ENCODE measurements at regions of chr1 and their contacts with region 1.

Region 1: GRCh38 chr1:193569096-193569982 is 382.9 kb upstream of the B3GALT2 start:
- DNase-seq: peak; percentile 51 to 69 (median 57)
- H3K4me3 ChIP-seq: no peak overlapping the region
- H3K4me3 Mint-ChIP-seq: peak overlapping the region in 7 of 8 donors; percentile 45 to 84 (median 74)
- H3K27ac ChIP-seq: peak overlapping the region; percentile 43
- H3K27ac Mint-ChIP-seq: peak overlapping the region; percentile 79 to 99 (median 92)
- H3K4me1 ChIP-seq: peaks cover 26% of the 10 kb centered on the region
- H3K4me1 Mint-ChIP-seq: peaks cover 25 to 42% (median 33%) of the 10 kb centered on the region in 4 donors
- H3K27me3 ChIP-seq: no peaks in the 10 kb centered on the region
- H3K27me3 Mint-ChIP-seq: no peaks in the 10 kb centered on the region

Region 2: DNA sequence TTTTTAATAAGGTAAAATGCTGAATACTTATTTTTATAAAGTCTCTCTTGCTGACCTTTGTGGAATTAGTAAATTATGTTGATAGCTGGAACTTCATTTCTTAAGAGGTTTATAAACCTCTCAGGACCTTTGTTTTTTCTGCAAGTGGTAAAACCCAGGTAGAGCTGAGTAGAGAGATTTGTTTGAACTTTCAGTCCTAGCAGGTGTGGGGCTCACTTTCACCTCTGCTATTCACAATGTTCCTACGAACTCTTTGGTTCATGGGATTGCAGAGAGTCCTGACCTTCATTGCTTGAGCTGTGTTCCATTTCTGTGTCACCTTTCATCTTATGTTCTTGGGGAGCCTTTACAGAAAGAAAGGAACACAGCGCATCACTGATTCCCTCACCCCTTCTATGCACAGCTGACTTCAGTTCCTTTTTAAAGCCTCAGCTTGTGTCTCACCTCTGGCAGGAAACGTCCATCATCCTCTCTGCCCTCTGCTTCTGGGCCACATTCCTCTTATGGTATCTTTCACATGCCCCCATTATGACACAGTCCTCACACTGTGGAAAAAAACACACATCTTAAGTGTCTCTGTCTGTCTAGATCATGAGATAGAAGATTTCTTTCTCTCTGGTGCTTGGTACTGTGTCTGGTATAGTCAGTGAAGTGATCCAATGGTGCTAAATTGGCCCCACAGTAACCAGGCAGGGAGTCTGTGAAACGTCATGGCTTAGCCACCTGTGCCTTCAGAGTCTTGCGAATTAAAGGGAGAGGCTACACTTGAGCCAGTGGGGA is 120.5 kb before region 1 on chr1:
- CTCF ChIA-PET with region 1: no interaction called
- POLR2A ChIA-PET with region 1: no interaction called
- intact Hi-C with region 1: no loop called
- DNase-seq: peak; percentile 39 to 67 (median 41)
- H3K4me3 ChIP-seq: no peak overlapping the region
- H3K4me3 Mint-ChIP-seq: peak overlapping the region in 7 of 8 donors; percentile 1 to 53 (median 9)
- H3K27ac ChIP-seq: peak overlapping the region; percentile 36
- H3K27ac Mint-ChIP-seq: peak overlapping the region; percentile 68 to 95 (median 82)
- H3K4me1 ChIP-seq: peaks cover 18% of the 10 kb centered on the region
- H3K4me1 Mint-ChIP-seq: peaks cover 16 to 23% (median 18%) of the 10 kb centered on the region in 4 donors
- H3K27me3 ChIP-seq: no peaks in the 10 kb centered on the region
- H3K27me3 Mint-ChIP-seq: no peaks in the 10 kb centered on the region

Region 3: DNA sequence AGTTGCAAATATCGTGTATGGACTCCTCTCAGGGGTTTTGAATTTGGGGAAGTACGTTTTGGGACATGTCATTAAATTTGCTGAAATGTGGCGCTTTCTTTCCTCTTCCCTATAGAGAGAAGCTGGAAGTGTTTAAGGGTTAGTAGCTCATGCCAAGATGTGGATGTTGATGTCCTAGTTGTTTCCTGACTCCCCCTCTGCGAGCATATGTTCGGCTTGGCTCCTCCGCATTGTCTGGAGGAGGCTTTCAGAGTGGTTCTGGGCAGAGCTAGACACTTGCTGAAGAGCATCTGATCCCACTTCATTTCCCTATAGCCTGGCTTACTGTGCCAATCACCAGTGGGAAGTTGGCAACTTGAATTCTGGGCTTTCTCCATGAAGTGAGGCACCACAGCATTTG is 35.5 kb before region 1 on chr1:
- CTCF ChIA-PET with region 1: no interaction called
- POLR2A ChIA-PET with region 1: no interaction called
- intact Hi-C with region 1: no loop called
- DNase-seq: no peak
- H3K4me3 ChIP-seq: no peak overlapping the region
- H3K4me3 Mint-ChIP-seq: no peak overlapping the region
- H3K27ac ChIP-seq: no peak overlapping the region
- H3K27ac Mint-ChIP-seq: peak overlapping the region in 1 of 7 donors; percentile 39
- H3K4me1 ChIP-seq: peaks cover 27% of the 10 kb centered on the region
- H3K4me1 Mint-ChIP-seq: peaks cover 14 to 22% (median 20%) of the 10 kb centered on the region in 4 donors
- H3K27me3 ChIP-seq: no peaks in the 10 kb centered on the region
- H3K27me3 Mint-ChIP-seq: no peaks in the 10 kb centered on the region

Region 4: DNA sequence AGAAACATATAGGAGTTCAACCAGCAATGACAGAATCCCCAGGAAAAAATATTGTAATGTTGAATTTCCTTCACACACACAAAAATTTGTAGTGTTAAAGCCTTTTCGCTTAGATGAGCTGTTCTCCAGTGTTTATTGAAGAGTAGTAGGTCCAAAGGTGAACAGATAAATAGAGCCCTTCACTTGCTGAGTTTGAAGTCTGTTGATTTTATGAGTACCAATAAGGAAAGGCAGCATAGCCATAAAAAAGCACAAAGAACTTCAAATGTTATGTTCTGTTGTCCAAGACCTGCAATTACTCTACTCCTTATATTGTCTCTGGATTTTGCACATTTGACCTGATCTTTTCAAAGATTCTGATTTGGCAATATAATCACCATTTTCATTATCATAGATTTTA is 20.3 kb before region 1 on chr1:
- CTCF ChIA-PET with region 1: no interaction called
- POLR2A ChIA-PET with region 1: no interaction called
- intact Hi-C with region 1: loop called (anchors 2 kb)
- DNase-seq: no peak
- H3K4me3 ChIP-seq: no peak overlapping the region
- H3K4me3 Mint-ChIP-seq: peak overlapping the region in 5 of 8 donors; percentile 8 to 64 (median 50)
- H3K27ac ChIP-seq: no peak overlapping the region
- H3K27ac Mint-ChIP-seq: peak overlapping the region in 3 of 7 donors; percentile 29 to 51 (median 47)
- H3K4me1 ChIP-seq: peaks cover 12% of the 10 kb centered on the region
- H3K4me1 Mint-ChIP-seq: peaks cover 13 to 38% (median 24%) of the 10 kb centered on the region in 4 donors
- H3K27me3 ChIP-seq: no peaks in the 10 kb centered on the region
- H3K27me3 Mint-ChIP-seq: no peaks in the 10 kb centered on the region

Region 5: GRCh38 chr1:193558491-193559028 is 10.8 kb before region 1 on chr1:
- CTCF ChIA-PET with region 1: no interaction called
- POLR2A ChIA-PET with region 1: interaction called, 16 read pairs
- intact Hi-C with region 1: no loop called
- DNase-seq: peak in 2 of 5 donors; percentile 17 to 45
- H3K4me3 ChIP-seq: no peak overlapping the region
- H3K4me3 Mint-ChIP-seq: peak overlapping the region in 7 of 8 donors; percentile 7 to 65 (median 39)
- H3K27ac ChIP-seq: no peak overlapping the region
- H3K27ac Mint-ChIP-seq: peak overlapping the region; percentile 48 to 96 (median 81)
- H3K4me1 ChIP-seq: peaks cover 12% of the 10 kb centered on the region
- H3K4me1 Mint-ChIP-seq: peaks cover 11 to 31% (median 18%) of the 10 kb centered on the region in 4 donors
- H3K27me3 ChIP-seq: no peaks in the 10 kb centered on the region
- H3K27me3 Mint-ChIP-seq: no peaks in the 10 kb centered on the region

Measured in CD4-positive, alpha-beta memory T cell (primary cell).